HEK293T (cell line): ENCODE measurements at regions of chr16 and their contacts with region 1.

Region 1: DNA sequence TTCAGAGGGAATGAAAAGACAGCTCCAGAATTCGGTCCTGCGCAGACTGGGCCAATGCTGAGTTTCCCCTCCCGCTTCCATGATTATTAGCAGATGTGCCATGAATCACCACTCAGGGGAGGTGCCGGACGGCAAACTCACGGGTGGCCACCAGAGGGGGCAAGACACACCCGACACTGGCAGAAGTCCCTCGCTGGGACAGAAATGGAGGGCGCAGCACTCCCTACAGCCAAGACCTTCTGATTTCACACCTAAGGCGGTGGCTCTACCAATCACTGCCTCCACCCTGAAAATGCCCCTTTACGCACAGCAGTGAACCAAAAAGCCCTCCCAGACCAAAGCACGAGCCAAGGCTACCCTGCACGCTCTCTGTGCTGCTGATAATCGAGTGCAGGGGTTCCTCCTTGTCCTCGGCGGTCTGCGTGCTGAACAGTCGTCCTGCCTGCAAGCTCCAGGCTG is 26.8 kb downstream of the TRAP1 start:
- DNase-seq: peak; percentile 89

Region 2: DNA sequence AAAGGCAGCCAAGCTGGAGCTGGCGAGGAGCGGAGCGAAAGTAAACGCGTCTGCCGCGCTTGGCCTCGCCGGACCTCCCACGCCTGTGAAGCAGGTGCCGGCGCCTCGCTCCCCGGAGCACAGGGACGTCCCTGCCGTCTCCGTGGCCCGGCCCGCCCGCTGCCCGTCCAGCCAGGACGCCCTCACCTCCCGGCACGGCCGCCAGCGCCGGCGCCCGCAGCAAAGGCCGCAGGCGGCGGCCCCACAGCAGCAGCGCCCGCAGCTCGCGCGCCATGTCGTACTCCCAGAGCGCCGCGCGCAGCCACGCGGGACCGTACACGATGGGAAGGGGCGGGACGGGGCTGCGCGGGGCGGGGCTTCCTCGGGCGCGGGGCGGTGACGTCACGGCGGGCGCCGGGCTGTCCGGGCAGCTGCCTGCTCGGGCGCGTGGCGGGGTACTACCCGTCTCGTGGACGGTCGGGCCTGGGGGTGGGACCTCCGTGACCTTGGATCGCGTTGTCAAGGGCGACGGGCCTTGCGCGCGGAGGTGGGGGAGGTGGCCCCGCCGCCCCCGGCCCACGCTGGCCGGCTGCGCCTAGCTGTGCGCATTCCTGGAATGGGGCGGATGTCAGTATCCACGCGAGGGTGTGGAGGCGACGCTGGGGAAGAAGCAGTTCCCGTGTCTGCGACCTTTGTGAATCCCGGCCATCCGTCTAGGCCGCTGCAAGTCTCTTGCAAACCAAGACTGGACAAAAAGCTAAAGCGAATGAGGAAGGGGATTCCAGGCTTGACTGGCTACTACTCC is 26.9 kb after region 1 on chr16 and contains the start of gene TRAP1:
- CTCF ChIA-PET with region 1: interaction called, 3 read pairs
- POLR2A ChIA-PET with region 1: interaction called, 11 read pairs
- DNase-seq: peak; percentile 96